ENCODE measurements at regions of chr3 and their contacts with region 1.

Region 1: GRCh38 chr3:148950806-148951205 is 40.5 kb upstream of the GYG1 start:
- DNase-seq: no peak
- H3K4me3 ChIP-seq: no peak overlapping the region
- CTCF ChIP-seq: peak; percentile 20

Region 2: DNA sequence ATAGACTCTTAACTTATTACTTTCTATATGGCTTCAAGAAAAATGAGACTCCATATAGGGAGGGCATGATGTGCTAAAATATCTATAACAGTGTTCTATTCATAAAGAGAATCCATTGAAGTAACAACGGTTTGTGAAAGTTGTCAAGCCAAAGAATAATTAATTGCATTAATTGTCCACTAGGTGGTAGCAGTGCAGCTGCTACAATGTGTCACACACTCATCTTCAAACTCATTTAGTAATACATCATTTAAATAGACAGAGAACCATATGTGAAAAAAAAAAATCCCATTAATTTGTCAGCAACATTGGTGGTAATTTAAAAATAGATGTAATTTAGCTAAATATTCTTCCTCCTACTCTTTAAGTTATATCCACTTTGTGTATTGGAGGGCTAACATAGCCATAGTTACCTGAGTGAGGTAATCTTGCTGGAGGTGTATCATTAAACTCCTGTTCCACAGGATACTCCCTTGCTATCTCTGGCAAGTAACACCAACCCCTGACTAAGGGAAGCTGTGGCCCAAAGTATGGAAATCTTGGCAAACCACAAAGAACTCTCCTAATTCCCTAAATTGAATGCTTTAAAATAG is 89.4 kb before region 1 on chr3:
- in situ Hi-C with region 1: loop called (anchors 5 kb)
- DNase-seq: peak; percentile 52
- H3K4me3 ChIP-seq: no peak overlapping the region
- CTCF ChIP-seq: peak; percentile 54

Region 3: GRCh38 chr3:149023951-149024350 is 73.1 kb after region 1 on chr3:
- in situ Hi-C with region 1: no loop called
- DNase-seq: no peak
- H3K4me3 ChIP-seq: no peak overlapping the region
- CTCF ChIP-seq: no peak

Region 4: DNA sequence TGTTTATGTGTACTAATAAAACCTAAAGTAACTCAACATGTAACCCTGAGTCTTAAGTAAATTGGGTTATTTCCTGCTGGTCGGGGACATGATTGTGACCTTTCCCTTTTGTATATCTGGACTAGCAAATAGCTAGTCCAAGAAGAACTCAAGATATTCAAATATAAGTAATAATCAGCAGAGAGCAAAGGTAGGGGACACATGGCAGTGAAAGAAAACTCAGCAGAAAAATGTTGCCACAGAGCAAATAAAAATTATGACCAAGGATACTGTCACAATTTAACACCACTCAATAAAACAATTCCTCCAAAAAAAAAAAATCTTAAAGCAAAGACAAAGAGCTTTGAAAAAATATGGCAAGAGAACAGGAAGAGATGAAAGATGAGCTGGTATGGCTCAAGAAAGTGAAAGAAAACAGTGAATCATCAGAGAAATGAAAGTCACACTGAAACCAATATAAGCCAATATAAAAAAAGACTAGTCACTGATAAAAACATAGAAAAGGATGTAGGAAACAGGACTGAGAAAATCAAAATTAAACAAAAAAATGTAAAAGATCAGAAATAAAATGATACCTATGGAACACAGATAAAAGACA is 92.1 kb after region 1 on chr3:
- in situ Hi-C with region 1: no loop called
- DNase-seq: peak; percentile 9
- H3K4me3 ChIP-seq: no peak overlapping the region
- CTCF ChIP-seq: no peak

Region 5: GRCh38 chr3:149501524-149501923 is 550.7 kb after region 1 on chr3:
- in situ Hi-C with region 1: no loop called
- DNase-seq: peak; percentile 82
- H3K4me3 ChIP-seq: no peak overlapping the region
- CTCF ChIP-seq: no peak

Measured in astrocyte of the cerebellum (primary cell).